ENCODE measurements at regions of chr19 and their contacts with region 1.

Region 1: DNA sequence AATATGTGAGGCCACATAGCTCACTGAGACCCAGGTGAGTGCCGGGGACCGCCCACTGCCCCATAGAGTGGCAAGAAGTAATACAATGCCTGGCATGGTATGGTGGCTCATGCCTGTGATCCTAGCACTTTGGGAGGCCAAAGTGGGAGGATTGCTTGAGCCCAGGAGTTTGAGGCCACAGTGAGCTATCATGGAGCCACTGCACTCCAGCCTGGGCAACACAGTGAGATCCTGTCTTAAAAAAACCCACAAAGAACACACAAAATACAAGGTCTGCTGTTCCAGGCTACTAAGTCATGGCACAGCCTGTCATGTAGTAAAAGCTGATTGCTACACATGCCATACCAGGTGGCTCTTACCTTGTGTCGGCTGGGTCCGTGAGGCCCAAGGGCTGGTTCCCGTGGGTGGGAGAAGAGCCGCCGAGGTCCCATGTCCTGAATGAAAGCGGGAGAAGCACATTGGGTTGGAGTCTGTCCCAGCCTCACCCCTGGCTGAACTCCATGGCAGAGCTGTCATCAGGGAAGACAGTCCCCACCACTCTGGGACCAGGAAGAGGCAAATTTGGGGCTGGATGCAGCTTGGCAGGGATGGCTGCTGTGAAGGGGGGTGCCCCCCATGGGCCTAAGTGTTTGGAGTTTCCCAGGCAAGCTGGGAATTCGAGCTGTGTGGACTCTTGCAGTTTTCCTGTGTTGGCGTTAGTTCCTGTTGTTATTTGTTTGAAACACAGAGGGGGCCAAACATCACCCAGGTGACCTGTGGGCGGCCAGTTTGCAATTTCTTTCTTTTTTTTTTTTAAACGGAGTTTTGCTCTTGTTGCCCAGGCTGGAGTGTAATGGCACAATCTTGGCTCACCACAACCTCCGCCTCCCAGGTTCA is 3.2 kb upstream of the FDX2 start:
- DNase-seq: no peak
- H3K4me3 ChIP-seq: no peak overlapping the region
- H3K27ac ChIP-seq: no peak overlapping the region
- H3K4me1 ChIP-seq: peaks cover 13% of the 10 kb centered on the region
- CTCF ChIP-seq: no peak

Region 2: DNA sequence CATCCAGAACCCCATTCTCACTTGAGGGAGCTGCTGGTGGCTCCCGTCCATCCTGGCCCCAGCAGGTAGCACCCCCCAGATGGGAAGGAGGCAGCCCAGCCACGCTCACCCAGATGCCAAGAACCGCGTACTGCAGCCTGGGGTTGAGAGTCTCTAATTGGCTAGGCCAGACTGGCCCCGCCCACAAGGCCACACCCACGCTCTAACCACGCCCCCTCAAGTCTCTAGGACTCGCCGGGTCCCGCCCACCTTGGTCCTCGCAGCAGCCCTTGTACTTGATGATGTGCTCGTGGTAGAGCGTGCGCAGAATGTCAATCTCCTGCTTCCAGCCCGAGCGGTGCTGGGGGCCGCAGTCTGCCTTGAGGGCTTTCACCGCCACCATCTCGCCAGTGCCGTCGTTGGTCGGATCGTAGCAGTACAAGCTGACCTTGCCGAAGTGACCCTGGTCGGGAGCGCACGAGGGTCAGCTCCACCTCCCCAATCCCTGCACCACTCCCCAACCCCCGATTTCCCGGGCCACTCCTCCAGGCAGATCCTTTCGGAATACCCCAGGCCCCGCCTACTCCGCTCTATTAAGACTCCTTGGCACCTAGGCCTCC is 34.8 kb after region 1 on chr19:
- CTCF ChIA-PET with region 1: no interaction called
- POLR2A ChIA-PET with region 1: no interaction called
- intact Hi-C with region 1: loop called (anchors 2 kb)
- DNase-seq: peak; percentile 78
- H3K4me3 ChIP-seq: no peak overlapping the region
- H3K27ac ChIP-seq: no peak overlapping the region
- H3K4me1 ChIP-seq: no peaks in the 10 kb centered on the region
- CTCF ChIP-seq: no peak

Region 3: GRCh38 chr19:10523135-10523636 is 204.1 kb after region 1 on chr19:
- CTCF ChIA-PET with region 1: no interaction called
- POLR2A ChIA-PET with region 1: no interaction called
- intact Hi-C with region 1: no loop called
- DNase-seq: no peak
- H3K4me3 ChIP-seq: no peak overlapping the region
- H3K27ac ChIP-seq: no peak overlapping the region
- H3K4me1 ChIP-seq: peaks cover 5% of the 10 kb centered on the region
- CTCF ChIP-seq: no peak

Measured in OCI-LY7 (cell line).